ENCODE measurements at regions of chr2 and their contacts with region 1.

Region 1: GRCh38 chr2:221060376-221060775 is 511.7 kb downstream of the EPHA4 start:
- DNase-seq: no peak

Region 2: GRCh38 chr2:221050020-221050795 is 10.2 kb before region 1 on chr2:
- intact Hi-C with region 1: loop called in 1 of 2 experiments (anchors 1 kb)
- DNase-seq: no peak

Region 3: GRCh38 chr2:221085341-221085900 is 25.0 kb after region 1 on chr2:
- intact Hi-C with region 1: loop called in 1 of 2 experiments (anchors 2 kb)
- DNase-seq: no peak